AG04450 (cell line): ENCODE measurements at regions of chr2 and their contacts with region 1.

Region 1: DNA sequence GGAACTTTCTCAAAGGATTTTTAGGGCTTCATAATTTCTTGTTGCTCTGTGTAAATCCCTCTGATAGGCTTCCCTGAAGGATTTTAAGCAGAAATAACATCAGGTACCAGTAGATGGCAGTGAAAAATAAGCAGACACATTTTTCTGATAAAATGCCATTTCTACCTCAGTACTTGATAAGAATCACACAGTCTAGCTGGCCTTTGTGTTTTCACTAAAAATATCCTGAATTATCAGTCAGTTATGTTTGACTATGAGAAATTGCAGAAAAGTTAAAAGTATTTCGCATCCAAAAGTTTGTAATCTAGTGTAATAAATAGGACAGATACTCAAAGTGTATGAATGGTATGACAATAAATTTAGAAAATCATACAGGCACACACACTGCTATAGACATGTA is 68.7 kb downstream of the DNAJC10 start:
- DNase-seq: no peak
- H3K4me3 ChIP-seq: no peak overlapping the region
- H3K27ac ChIP-seq: no peak overlapping the region
- H3K27me3 ChIP-seq: no peaks in the 10 kb centered on the region
- CTCF ChIP-seq: peak; percentile 71

Region 2: GRCh38 chr2:182858671-182859070 is 73.9 kb after region 1 on chr2:
- CTCF ChIA-PET with region 1: no interaction called
- POLR2A ChIA-PET with region 1: no interaction called
- DNase-seq: no peak
- H3K4me3 ChIP-seq: no peak overlapping the region
- H3K27ac ChIP-seq: no peak overlapping the region
- H3K27me3 ChIP-seq: peaks cover 6% of the 10 kb centered on the region
- CTCF ChIP-seq: no peak

Region 3: DNA sequence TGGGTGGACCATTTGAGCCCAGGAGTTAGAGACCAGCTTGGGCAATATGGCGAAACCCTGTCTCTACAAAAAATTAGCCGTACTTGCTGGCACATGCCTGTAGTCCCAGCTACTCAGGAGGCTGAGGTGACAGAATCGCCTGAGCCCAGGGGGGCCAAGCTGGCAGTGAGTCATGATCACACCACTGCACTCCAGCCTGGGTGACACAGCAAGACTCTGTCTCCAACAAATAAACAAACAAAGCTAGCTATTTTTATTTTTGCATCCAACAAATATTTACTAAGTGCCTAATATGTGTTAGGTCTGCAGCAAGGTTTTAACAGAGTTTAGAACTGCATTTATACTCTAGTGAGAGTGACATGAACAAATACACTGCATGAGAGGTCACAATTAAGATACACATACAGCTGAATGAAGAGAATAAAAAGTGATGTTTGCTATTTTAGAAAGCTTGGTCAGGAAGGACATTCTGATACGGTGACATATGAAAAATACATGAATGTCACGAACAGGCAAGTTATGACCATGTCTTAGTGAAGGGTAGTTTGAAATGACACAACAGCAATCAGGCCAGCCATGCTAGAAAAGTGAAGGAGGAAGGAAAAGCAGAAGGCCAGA is 164.9 kb after region 1 on chr2:
- CTCF ChIA-PET with region 1: interaction called, 11 read pairs
- POLR2A ChIA-PET with region 1: no interaction called
- DNase-seq: no peak
- H3K4me3 ChIP-seq: no peak overlapping the region
- H3K27ac ChIP-seq: no peak overlapping the region
- H3K27me3 ChIP-seq: no peaks in the 10 kb centered on the region
- CTCF ChIP-seq: no peak

Region 4: DNA sequence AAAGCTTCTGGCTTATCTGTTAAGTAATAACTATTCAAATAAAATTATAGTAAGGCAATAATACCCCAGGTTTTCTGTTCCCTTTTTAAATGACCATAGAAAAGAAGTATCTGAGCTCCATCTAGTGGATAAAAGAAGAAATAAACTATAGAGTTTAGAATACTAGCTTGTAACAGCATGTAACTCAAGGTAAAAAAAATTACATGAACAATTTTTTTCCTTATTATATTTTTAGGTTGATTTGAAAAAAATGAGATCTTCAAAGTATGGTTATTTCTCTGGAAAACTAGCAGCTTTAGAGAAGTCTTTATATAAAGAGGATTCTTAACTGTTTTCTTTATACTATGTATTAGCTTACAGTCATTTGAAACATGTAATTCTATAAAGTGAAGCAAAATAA is 195.3 kb after region 1 on chr2:
- CTCF ChIA-PET with region 1: interaction called, 99 read pairs
- POLR2A ChIA-PET with region 1: no interaction called
- DNase-seq: no peak
- H3K4me3 ChIP-seq: no peak overlapping the region
- H3K27ac ChIP-seq: no peak overlapping the region
- H3K27me3 ChIP-seq: no peaks in the 10 kb centered on the region
- CTCF ChIP-seq: peak; percentile 48